ENCODE measurements at regions of chr19 and their contacts with region 1.

Region 1: GRCh38 chr19:45667620-45668341 is at the start of gene GIPR:
- DNase-seq: peak in 1 of 2 donors; percentile 38
- H3K4me3 ChIP-seq: peak within 1 kb of the TSS; percentile 0 to 66 (median 45)
- H3K27ac ChIP-seq: peak within 1 kb of the TSS; percentile 21 to 25
- H3K4me1 ChIP-seq: peaks cover 0 to 5% of the 10 kb centered on the region in 2 donors
- H3K27me3 ChIP-seq: peaks cover 2 to 13% of the 10 kb centered on the region in 2 donors
- CTCF ChIP-seq: no peak
- POLR2A ChIP-seq: no peak
- total RNA-seq, gene GIPR: 0.16 to 4.9 (median 4.8) TPM

Region 2: DNA sequence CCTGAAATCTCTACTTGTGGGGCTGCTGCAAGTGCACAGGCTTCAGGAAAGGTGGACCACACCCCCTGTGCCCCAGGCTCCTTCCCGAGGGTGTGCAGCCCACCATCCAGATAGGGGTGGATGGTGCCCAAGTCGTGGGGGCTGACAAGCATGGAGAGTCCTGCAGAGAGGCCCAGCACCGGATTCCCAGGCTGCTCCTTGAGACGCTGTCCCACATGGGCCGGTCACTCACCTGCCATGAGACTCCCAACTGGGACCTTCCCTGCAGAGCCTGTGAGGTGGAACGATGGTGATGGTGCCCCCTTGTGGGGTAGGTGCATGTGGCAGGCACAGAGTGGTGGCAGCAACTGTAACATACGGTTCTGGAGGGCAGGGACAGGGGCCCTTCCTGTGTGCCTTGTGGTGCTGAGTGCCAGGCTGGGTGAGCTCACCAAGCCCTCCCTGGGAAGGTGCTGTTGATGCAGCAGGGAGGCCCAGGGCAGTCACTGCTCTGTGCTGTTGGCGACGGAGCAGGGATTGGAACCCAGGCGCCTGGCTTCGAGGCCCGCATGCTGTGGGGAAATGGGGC is 541.8 kb before region 1 on chr19:
- intact Hi-C with region 1: loop called (anchors 10 kb)
- DNase-seq: peak; percentile 53 to 86
- H3K4me3 ChIP-seq: no peak overlapping the region
- H3K27ac ChIP-seq: no peak overlapping the region
- H3K4me1 ChIP-seq: peaks cover 0 to 15% of the 10 kb centered on the region in 2 donors
- H3K27me3 ChIP-seq: no peaks in the 10 kb centered on the region
- CTCF ChIP-seq: peak; percentile 62 to 77 (median 66)
- POLR2A ChIP-seq: no peak